Heart right ventricle (tissue), 16 donors: ENCODE measurements at regions of chr15 and their contacts with region 1.

Region 1: DNA sequence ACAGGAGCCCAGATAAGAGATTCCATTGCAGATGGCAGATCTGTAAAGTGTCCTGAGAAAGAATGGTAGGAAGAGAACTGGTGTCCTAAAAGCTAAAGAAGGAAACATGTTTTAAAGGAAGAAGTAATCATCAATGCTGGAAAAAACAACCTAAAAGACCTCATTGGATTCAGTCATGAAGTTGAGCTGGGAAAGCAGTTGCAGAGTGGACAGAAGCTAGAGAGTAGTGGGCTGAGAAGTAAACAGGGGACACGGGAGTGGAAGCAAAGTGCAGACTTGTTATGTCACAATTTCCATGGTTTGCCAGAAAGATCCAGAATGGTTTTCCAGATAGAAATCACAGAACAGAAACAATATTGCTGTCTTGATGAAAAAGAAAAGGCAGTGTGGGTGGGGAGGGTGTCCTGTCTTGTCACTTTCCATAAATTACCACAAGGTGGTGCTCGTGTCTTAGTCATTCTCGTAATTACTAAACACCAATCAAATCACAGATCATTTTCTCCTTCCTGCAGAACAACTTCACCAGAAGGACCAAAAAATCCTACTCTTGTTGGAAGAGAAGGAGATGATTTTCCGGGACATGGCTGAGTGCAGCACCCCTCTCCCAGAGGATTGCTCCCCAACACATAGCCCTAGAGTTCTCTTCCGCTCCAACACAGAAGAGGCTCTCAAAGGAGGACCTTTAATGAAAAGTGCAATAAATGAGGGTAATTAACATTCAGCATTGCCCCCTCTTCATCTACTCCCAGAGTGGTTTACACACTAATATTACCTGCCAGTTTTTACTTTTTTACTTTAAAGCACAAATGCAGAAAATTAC is 64.5 kb downstream of the KLHL25 start:
- DNase-seq: peak in 1 of 2 donors; percentile 60
- ATAC-seq: peak; percentile 35 to 74 (median 56)
- H3K4me3 ChIP-seq: no peak overlapping the region
- H3K27ac ChIP-seq: peak overlapping the region in 4 of 10 donors; percentile 5 to 78 (median 38)
- H3K4me1 ChIP-seq: peaks cover 0 to 34% (median 22%) of the 10 kb centered on the region in 9 donors
- H3K27me3 ChIP-seq: no peaks in the 10 kb centered on the region
- CTCF ChIP-seq: peak; percentile 54 to 81 (median 75)

Region 2: DNA sequence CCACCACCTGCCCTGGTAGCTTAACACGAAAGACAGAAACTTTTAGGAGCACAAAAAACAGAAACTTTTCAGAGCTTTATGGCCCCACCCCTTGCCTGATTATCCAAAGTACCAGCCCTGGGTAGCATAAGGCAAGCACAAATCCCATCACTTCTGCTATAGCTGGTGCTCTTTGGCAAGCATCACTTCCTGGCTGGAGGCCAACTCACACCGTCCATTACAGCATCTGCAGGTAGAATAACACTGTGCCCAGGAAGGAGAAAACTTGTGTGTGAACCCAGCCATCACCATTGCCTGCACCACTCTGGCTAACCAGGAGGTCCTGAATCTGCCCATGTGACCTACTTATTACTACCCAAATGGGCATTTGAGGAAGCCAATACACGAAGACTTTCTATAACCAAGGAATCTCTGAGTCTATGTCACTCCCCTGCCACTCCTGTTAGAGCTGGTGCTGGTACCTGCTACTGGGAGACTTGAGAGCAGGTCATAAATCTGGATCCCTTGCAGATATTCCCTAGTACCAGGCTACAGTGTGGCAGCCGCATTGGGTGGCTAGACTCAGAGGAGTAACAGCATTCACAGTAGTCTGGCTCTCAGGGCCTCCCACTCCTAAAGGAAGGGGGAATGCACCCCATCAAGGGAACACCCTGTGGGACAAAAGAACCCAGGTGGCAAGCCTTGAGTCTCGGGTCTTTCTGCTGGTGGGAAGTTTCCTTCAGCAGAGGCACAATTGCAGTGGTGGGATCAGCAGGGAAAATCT is 423.1 kb before region 1 on chr15:
- intact Hi-C with region 1: loop called in 1 of 10 experiments (anchors 10 kb)
- DNase-seq: no peak
- ATAC-seq: peak in 1 of 8 donors; percentile 44
- H3K4me3 ChIP-seq: no peak overlapping the region
- H3K27ac ChIP-seq: no peak overlapping the region
- H3K4me1 ChIP-seq: no peaks in the 10 kb centered on the region
- H3K27me3 ChIP-seq: no peaks in the 10 kb centered on the region
- CTCF ChIP-seq: no peak

Region 3: GRCh38 chr15:85485956-85486567 is 244.1 kb before region 1 on chr15:
- intact Hi-C with region 1: loop called in 2 of 10 experiments (anchors 10 kb)
- DNase-seq: peak in 1 of 2 donors; percentile 67
- ATAC-seq: peak; percentile 54 to 83 (median 76)
- H3K4me3 ChIP-seq: no peak overlapping the region
- H3K27ac ChIP-seq: peak overlapping the region in 1 of 10 donors; percentile 0
- H3K4me1 ChIP-seq: peaks cover 0 to 76% (median 51%) of the 10 kb centered on the region in 9 donors
- H3K27me3 ChIP-seq: no peaks in the 10 kb centered on the region
- CTCF ChIP-seq: peak; percentile 63 to 91 (median 82)

Region 4: GRCh38 chr15:85625856-85626255 is 104.4 kb before region 1 on chr15:
- intact Hi-C with region 1: loop called in 1 of 10 experiments (anchors 10 kb)
- DNase-seq: no peak
- ATAC-seq: peak in 4 of 8 donors; percentile 28 to 39 (median 31)
- H3K4me3 ChIP-seq: no peak overlapping the region
- H3K27ac ChIP-seq: peak overlapping the region in 9 of 10 donors; percentile 8 to 93 (median 84)
- H3K4me1 ChIP-seq: peaks cover 21 to 98% (median 90%) of the 10 kb centered on the region in 9 donors
- H3K27me3 ChIP-seq: no peaks in the 10 kb centered on the region
- CTCF ChIP-seq: no peak

Region 5: GRCh38 chr15:85757073-85757938 is 27.1 kb after region 1 on chr15:
- intact Hi-C with region 1: no loop called
- DNase-seq: peak; percentile 55 to 57
- ATAC-seq: peak in 7 of 8 donors; percentile 8 to 67 (median 41)
- H3K4me3 ChIP-seq: no peak overlapping the region
- H3K27ac ChIP-seq: peak overlapping the region in 3 of 10 donors; percentile 15 to 52 (median 32)
- H3K4me1 ChIP-seq: peaks cover 11 to 80% (median 39%) of the 10 kb centered on the region in 9 donors
- H3K27me3 ChIP-seq: no peaks in the 10 kb centered on the region
- CTCF ChIP-seq: no peak

Region 6: DNA sequence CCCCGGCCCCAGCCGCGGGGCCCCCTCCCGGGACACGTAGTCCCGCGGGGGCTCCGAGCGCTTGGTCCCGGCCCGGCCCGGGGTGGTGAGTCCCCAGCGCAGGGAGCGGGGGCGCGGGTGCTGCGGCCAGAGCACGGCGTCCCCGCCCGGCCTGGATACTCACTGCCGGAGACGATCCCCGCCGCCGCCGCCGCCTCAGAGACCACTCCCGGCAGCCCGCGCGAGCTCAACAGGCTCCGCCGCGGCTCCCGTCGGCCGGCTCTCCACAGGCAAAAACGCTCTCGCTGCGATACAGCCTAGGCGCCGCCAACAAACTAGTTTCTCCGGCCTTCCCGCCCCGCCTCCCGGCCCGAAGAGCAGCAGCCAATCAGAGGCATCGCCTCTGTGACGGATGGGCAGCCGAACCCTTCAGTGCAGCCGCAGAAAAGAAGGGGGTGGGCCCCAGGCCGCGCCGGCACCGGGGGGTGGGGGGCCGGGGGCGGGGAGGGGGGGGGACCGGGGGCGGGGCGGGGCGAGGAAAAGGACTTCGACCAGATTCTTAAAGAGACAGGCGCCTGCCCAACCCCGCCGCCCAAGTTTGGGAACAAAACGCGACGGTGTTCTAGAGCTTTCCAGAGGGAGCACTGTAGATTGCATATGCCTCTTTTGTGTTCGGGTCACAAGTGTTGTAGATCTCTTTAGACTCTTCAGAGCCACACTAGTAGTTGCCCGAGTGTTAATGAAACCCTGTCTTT is 64.6 kb after region 1 on chr15 and contains the start of gene KLHL25:
- intact Hi-C with region 1: loop called in 2 of 10 experiments (anchors 5 to 10 kb)
- DNase-seq: peak; percentile 94 to 95
- ATAC-seq: peak; percentile 96 to 98 (median 98)
- H3K4me3 ChIP-seq: peak within 1 kb of the TSS; percentile 73 to 98 (median 89)
- H3K27ac ChIP-seq: peak within 1 kb of the TSS; percentile 52 to 95 (median 90)
- H3K4me1 ChIP-seq: peaks cover 0 to 29% (median 24%) of the 10 kb centered on the region in 9 donors
- H3K27me3 ChIP-seq: peaks cover 0 to 9% (median 0%) of the 10 kb centered on the region in 7 donors
- CTCF ChIP-seq: no peak
- total RNA-seq, gene KLHL25: 1.9 to 4.6 (median 3.2) TPM

Region 7: GRCh38 chr15:85840065-85840801 is 110.0 kb after region 1 on chr15:
- intact Hi-C with region 1: loop called in 2 of 10 experiments (anchors 1 kb)
- DNase-seq: peak; percentile 77 to 85
- ATAC-seq: peak; percentile 89 to 95 (median 94)
- H3K4me3 ChIP-seq: peak overlapping the region in 8 of 10 donors; percentile 3 to 45 (median 38)
- H3K27ac ChIP-seq: no peak overlapping the region
- H3K4me1 ChIP-seq: peaks cover 0 to 16% (median 9%) of the 10 kb centered on the region in 9 donors
- H3K27me3 ChIP-seq: peaks cover 0 to 8% (median 3%) of the 10 kb centered on the region in 7 donors
- CTCF ChIP-seq: peak; percentile 82 to 98 (median 93)